Naive thymus-derived CD4-positive, alpha-beta T cell (primary cell): ENCODE measurements at regions of chrX and their contacts with region 1.

Region 1: DNA sequence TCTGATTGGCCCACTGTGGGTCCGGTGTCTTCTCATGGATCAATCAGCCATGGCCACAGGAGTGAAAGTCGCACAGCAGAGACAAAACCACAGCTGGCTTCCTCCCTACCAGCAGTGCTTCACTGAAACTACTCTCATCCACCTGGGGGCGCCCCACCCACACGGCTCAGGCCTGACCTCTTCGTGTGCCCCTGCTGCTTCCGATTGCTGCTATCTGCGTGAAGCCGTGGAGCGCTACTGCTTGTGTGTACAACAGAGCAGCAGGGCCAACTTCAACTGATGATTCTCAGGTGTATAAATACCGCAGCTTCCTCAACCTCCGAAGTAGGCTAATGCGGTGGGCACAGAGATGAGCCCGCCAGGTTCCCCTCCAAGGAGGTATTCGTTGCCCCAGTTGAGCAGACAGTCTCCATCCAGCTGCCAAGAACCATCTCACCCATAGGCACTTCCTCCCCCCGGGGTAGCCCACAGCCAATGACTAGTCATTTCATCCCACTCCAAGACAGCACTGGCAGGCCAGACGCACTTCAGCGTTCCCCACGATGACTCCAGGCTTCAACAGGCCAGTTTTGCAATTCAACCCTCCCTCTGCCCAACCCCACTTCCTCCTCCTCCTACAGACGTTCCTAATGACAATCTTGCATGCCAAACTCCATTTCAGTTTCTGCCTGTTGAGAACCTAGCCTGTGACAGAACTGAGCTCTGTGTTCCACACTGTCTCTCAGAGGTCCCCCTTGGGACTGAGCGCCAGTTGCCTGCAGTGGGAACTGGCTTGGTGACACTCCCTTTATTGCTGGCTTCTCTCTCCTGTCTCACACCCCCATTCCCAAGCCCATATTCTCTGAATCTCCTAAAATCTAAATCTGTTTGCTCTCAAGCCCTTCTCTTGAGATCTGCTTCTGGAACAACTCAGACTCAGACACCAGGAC is 41.3 kb upstream of the ATP6AP2 start:
- DNase-seq: peak; percentile 46 to 78 (median 65)
- ATAC-seq: peak; percentile 94
- H3K4me3 ChIP-seq: peak overlapping the region; percentile 13
- H3K4me3 Mint-ChIP-seq: peak overlapping the region; percentile 21 to 76 (median 50)
- H3K27ac ChIP-seq: no peak overlapping the region
- H3K27ac Mint-ChIP-seq: peak overlapping the region; percentile 64 to 90 (median 78)
- H3K4me1 ChIP-seq: peaks cover 4 to 6% of the 10 kb centered on the region in 2 donors
- H3K4me1 Mint-ChIP-seq: peaks cover 15 to 32% (median 24%) of the 10 kb centered on the region in 7 donors
- H3K27me3 ChIP-seq: no peaks in the 10 kb centered on the region
- H3K27me3 Mint-ChIP-seq: peaks cover 0 to 4% (median 0%) of the 10 kb centered on the region in 5 donors

Region 2: GRCh38 chrX:40227125-40227524 is 312.4 kb before region 1 on chrX:
- CTCF ChIA-PET with region 1: no interaction called
- POLR2A ChIA-PET with region 1: no interaction called
- intact Hi-C with region 1: no loop called
- DNase-seq: no peak
- ATAC-seq: no peak
- H3K4me3 ChIP-seq: no peak overlapping the region
- H3K4me3 Mint-ChIP-seq: no peak overlapping the region
- H3K27ac ChIP-seq: no peak overlapping the region
- H3K27ac Mint-ChIP-seq: no peak overlapping the region
- H3K4me1 ChIP-seq: no peaks in the 10 kb centered on the region
- H3K4me1 Mint-ChIP-seq: no peaks in the 10 kb centered on the region
- H3K27me3 ChIP-seq: no peaks in the 10 kb centered on the region
- H3K27me3 Mint-ChIP-seq: no peaks in the 10 kb centered on the region

Region 3: DNA sequence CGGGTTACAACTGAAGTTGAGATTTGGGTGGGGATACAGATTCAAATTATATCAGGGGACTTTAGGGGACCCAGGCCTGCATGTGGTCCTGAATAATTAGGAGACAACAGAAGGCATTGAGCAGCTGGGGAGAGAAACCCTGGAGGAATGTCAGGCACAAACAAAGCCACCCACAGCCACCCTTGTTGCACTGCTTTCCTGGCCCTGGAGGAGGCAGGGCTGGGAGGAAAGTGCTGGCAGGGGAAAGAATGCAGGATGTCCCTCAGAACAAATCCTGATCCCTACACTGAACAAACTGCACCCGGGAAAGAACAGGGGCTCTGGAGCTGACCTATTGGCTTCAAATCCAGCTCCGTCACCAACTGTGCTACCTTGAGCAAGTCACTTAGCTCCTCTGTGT is 172.8 kb before region 1 on chrX:
- CTCF ChIA-PET with region 1: no interaction called
- POLR2A ChIA-PET with region 1: no interaction called
- intact Hi-C with region 1: no loop called
- DNase-seq: no peak
- ATAC-seq: no peak
- H3K4me3 ChIP-seq: no peak overlapping the region
- H3K4me3 Mint-ChIP-seq: no peak overlapping the region
- H3K27ac ChIP-seq: no peak overlapping the region
- H3K27ac Mint-ChIP-seq: no peak overlapping the region
- H3K4me1 ChIP-seq: no peaks in the 10 kb centered on the region
- H3K4me1 Mint-ChIP-seq: no peaks in the 10 kb centered on the region
- H3K27me3 ChIP-seq: no peaks in the 10 kb centered on the region
- H3K27me3 Mint-ChIP-seq: no peaks in the 10 kb centered on the region

Region 4: DNA sequence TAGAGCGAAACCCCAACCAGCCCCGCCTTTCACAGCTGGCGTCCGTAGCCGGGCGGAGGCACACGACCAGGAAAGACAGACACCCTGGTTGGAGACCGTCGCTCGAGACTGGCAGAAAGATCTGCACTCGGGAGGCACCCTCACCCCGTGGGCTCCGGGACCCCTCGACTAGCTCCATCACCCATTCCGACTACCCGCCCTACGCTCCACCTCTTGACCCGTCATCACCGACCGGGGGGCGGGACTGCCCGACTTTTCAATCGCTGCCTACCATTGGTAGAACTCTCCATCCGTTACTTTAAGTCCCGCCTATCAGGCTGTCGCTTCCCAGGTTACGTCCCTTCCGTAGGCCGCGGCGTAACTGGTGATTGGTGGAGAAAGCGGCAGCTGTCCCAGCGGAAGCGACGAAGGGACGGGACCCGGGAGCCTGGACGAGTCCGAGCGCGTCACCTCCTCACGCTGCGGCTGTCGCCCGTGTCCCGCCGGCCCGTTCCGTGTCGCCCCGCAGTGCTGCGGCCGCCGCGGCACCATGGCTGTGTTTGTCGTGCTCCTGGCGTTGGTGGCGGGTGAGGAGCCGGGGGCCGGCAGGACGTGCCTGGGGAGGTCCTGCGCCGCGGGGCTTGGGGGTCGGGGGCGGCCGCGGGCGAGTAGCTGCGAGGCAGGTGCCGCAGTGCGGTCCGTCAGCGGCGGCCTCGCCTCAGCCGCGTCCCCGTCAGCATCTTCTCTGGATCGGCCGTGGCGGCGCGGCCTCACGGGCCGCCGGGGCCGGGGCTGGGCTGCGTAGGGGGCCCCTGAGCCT is 41.3 kb after region 1 on chrX and contains the start of gene ATP6AP2:
- CTCF ChIA-PET with region 1: no interaction called
- POLR2A ChIA-PET with region 1: interaction called, 4 read pairs
- intact Hi-C with region 1: loop called in 1 of 2 experiments (anchors 5 kb)
- DNase-seq: peak; percentile 60 to 91 (median 88)
- ATAC-seq: peak; percentile 96
- H3K4me3 ChIP-seq: peak within 1 kb of the TSS; percentile 81
- H3K4me3 Mint-ChIP-seq: peak within 1 kb of the TSS; percentile 92 to 98 (median 94)
- H3K27ac ChIP-seq: peak within 1 kb of the TSS; percentile 90
- H3K27ac Mint-ChIP-seq: peak within 1 kb of the TSS; percentile 87 to 96 (median 95)
- H3K4me1 ChIP-seq: peaks cover 13 to 16% of the 10 kb centered on the region in 2 donors
- H3K4me1 Mint-ChIP-seq: peaks cover 21 to 38% (median 34%) of the 10 kb centered on the region in 7 donors
- H3K27me3 ChIP-seq: no peaks in the 10 kb centered on the region
- H3K27me3 Mint-ChIP-seq: no peaks in the 10 kb centered on the region
- total RNA-seq, gene ATP6AP2: 72.0 to 98.6 (median 82.5) TPM

Region 5: DNA sequence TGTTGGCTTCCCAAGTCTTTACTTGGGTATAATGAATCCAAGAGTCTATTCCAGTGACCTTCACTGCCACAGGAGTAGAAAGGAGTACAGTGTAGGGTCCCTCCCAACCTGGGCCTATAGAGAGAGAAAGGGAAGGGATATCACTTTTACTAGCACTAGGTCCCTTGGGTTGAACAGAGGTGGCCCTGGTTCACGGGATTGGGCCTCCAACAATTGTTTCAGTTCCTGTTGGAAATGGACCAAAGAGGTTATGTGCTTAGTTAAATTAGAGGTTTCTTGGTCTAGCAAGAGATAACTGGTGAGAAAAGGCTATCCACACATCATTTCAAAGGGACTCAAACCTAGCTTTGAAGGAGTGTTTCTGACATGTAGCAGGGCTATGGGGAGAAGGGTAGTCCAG is 253.0 kb after region 1 on chrX:
- CTCF ChIA-PET with region 1: interaction called, 17 read pairs
- POLR2A ChIA-PET with region 1: no interaction called
- intact Hi-C with region 1: loop called (anchors 1 kb)
- DNase-seq: no peak
- ATAC-seq: no peak
- H3K4me3 ChIP-seq: no peak overlapping the region
- H3K4me3 Mint-ChIP-seq: no peak overlapping the region
- H3K27ac ChIP-seq: no peak overlapping the region
- H3K27ac Mint-ChIP-seq: no peak overlapping the region
- H3K4me1 ChIP-seq: no peaks in the 10 kb centered on the region
- H3K4me1 Mint-ChIP-seq: peaks cover 0 to 6% (median 0%) of the 10 kb centered on the region in 7 donors
- H3K27me3 ChIP-seq: no peaks in the 10 kb centered on the region
- H3K27me3 Mint-ChIP-seq: peaks cover 0 to 9% (median 0%) of the 10 kb centered on the region in 5 donors

Region 6: DNA sequence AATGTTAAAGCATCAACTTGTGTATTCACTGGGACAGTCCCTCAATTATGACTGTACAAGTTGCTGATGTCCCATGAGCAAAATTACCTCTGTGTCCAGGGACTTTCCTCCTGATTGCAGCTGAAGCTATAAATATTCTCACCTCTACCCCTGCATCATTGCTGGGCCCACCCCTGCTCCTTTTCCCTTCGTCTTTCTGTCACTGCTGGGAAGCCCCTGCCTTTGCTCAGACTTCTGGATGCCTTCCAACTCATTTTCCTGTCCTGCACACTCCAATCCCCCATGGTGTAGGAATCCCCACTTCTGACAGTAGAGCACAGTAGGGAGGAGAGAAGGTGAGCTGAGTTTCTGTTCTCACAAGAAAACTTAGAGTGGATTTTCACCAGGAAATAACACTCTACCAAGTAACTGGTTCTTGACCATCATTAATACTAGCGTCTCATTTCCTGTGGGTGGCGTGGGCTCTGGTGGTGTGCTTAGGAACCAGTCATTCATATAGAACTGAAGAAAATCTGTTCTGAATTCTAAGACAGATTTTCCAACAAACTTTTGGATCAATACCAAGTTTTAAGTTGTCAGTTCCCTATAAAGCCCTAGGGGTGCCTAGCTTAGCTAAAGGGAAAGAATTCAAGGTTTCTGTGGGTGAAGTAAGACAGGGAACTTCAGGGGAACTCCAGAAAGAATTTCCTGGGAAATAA is 332.1 kb after region 1 on chrX:
- CTCF ChIA-PET with region 1: no interaction called
- POLR2A ChIA-PET with region 1: no interaction called
- intact Hi-C with region 1: no loop called
- DNase-seq: no peak
- ATAC-seq: no peak
- H3K4me3 ChIP-seq: no peak overlapping the region
- H3K4me3 Mint-ChIP-seq: no peak overlapping the region
- H3K27ac ChIP-seq: no peak overlapping the region
- H3K27ac Mint-ChIP-seq: no peak overlapping the region
- H3K4me1 ChIP-seq: no peaks in the 10 kb centered on the region
- H3K4me1 Mint-ChIP-seq: peaks cover 0 to 3% (median 0%) of the 10 kb centered on the region in 7 donors
- H3K27me3 ChIP-seq: no peaks in the 10 kb centered on the region
- H3K27me3 Mint-ChIP-seq: peaks cover 0 to 14% (median 1%) of the 10 kb centered on the region in 5 donors